PC-3 (cell line): ENCODE measurements at regions of chr10 and their contacts with region 1.

Region 1: DNA sequence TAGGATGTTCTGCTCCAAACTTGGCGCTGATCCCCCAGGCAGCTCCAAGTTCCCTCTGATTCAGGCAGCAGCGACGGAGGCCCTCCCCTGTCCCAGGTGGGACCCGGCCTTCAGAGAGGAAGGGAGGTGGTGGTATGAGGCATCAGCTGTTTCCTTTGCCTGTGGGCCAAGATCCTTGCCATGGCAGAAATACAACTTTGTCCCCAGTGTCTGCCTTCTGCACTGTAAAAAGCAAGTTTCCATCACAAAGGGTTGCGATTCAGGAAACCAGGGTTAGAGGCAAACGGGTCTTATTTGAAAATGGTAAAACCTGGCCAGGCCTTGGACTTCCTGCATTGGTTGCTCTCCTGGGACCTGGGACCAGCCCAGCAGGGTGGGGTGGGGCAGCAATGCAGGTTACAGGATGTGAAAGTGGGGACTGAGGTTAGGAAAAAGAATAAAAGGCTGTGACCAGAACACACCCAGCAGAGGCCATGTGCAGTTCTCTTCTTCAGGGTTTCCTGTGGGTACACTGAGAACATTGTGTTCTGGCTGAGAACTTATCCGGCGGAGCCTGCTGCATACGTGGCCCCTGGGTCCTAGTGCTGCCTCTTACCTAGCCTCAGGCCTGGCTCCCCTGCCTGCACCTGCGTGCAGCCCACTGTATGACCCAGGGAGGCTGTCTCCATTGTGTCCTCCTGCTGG is 25.1 kb upstream of the DDIT4 start:
- DNase-seq: no peak
- ATAC-seq: peak; percentile 30
- H3K4me3 ChIP-seq: no peak overlapping the region
- H3K27ac ChIP-seq: no peak overlapping the region
- H3K4me1 ChIP-seq: peaks cover 18% of the 10 kb centered on the region
- H3K27me3 ChIP-seq: no peaks in the 10 kb centered on the region
- CTCF ChIP-seq: no peak

Region 2: DNA sequence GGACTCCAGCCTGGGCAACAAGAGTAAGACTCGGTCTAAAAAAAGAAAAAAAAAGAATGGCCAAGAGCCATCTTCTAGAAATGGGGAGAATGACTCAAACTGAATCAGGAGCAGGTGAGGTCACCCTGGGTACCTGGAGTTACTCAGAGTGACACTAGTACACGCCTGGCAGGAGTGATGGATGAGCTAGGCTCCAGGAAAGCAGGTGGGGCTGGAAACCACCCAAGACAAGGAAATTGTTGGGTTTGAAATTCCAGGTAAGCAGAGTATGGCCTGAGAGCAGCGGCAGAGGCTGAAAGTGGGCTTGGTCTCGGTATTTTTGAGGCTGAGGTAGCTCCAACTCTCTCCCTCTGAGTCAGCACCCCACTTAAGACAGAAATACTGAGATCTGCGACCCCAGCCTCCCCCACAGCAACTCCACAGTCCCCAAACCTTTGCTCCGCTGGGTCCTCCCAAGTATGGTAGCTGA is 43.6 kb after region 1 on chr10:
- CTCF ChIA-PET with region 1: no interaction called
- POLR2A ChIA-PET with region 1: interaction called, 12 read pairs
- intact Hi-C with region 1: loop called (anchors 2 kb)
- DNase-seq: peak; percentile 93
- ATAC-seq: peak; percentile 81
- H3K4me3 ChIP-seq: no peak overlapping the region
- H3K27ac ChIP-seq: peak overlapping the region; percentile 92
- H3K4me1 ChIP-seq: peaks cover 32% of the 10 kb centered on the region
- H3K27me3 ChIP-seq: no peaks in the 10 kb centered on the region
- CTCF ChIP-seq: no peak

Region 3: GRCh38 chr10:72297281-72297967 is 48.8 kb after region 1 on chr10:
- CTCF ChIA-PET with region 1: no interaction called
- POLR2A ChIA-PET with region 1: interaction called, 12 read pairs
- intact Hi-C with region 1: loop called (anchors 2 kb)
- DNase-seq: peak; percentile 74
- ATAC-seq: peak; percentile 51
- H3K4me3 ChIP-seq: peak overlapping the region; percentile 66
- H3K27ac ChIP-seq: peak overlapping the region; percentile 97
- H3K4me1 ChIP-seq: peaks cover 30% of the 10 kb centered on the region
- H3K27me3 ChIP-seq: no peaks in the 10 kb centered on the region
- CTCF ChIP-seq: no peak

Region 4: GRCh38 chr10:72328045-72328828 is 79.6 kb after region 1 on chr10:
- CTCF ChIA-PET with region 1: no interaction called
- POLR2A ChIA-PET with region 1: no interaction called
- intact Hi-C with region 1: loop called (anchors 1 kb)
- DNase-seq: peak; percentile 65
- ATAC-seq: peak; percentile 61
- H3K4me3 ChIP-seq: no peak overlapping the region
- H3K27ac ChIP-seq: peak overlapping the region; percentile 37; the same call in 1 of the 2 replicates
- H3K4me1 ChIP-seq: peaks cover 21% of the 10 kb centered on the region
- H3K27me3 ChIP-seq: no peaks in the 10 kb centered on the region
- CTCF ChIP-seq: peak; percentile 75